PC-9 (cell line): ENCODE measurements at regions of chr3 and their contacts with region 1.

Region 1: DNA sequence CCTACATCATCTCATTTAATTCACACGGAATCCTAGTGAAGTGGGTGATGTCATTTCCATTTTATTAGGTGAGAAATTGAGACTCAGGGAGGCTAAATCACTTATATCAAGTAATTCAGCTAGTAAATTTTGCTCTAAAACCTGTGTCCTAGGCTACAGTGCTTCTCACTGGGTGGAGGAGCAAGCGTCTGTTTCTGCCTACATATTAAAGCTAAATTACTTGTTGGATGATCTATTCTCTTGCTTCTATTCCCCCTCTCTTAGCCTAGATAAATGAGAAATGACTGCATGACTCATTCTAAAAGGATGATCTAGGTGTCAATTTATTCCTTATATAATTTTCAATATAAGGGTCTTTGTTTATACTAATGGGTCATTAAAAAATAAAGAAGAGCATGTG is 37.8 kb upstream of the RBP1 start:
- DNase-seq: no peak
- H3K4me3 ChIP-seq: no peak overlapping the region
- H3K27ac ChIP-seq: no peak overlapping the region
- H3K4me1 ChIP-seq: no peaks in the 10 kb centered on the region
- H3K27me3 ChIP-seq: no peaks in the 10 kb centered on the region
- CTCF ChIP-seq: no peak

Region 2: GRCh38 chr3:139414608-139415224 is 162.6 kb before region 1 on chr3:
- CTCF ChIA-PET with region 1: no interaction called
- POLR2A ChIA-PET with region 1: interaction called, 11 read pairs
- intact Hi-C with region 1: no loop called
- DNase-seq: no peak
- H3K4me3 ChIP-seq: no peak overlapping the region
- H3K27ac ChIP-seq: no peak overlapping the region
- H3K4me1 ChIP-seq: no peaks in the 10 kb centered on the region
- H3K27me3 ChIP-seq: no peaks in the 10 kb centered on the region
- CTCF ChIP-seq: no peak

Region 3: GRCh38 chr3:139559541-139559940 is 17.8 kb before region 1 on chr3:
- CTCF ChIA-PET with region 1: no interaction called
- POLR2A ChIA-PET with region 1: no interaction called
- intact Hi-C with region 1: no loop called
- DNase-seq: peak; percentile 50 to 86
- H3K4me3 ChIP-seq: no peak overlapping the region
- H3K27ac ChIP-seq: 0 out of 2 replicates have a peak overlapping the region, but pooled peaks have one; percentile 39
- H3K4me1 ChIP-seq: peaks cover 47% of the 10 kb centered on the region
- H3K27me3 ChIP-seq: no peaks in the 10 kb centered on the region
- CTCF ChIP-seq: no peak

Region 4: GRCh38 chr3:139894643-139894989 is 317.3 kb after region 1 on chr3:
- CTCF ChIA-PET with region 1: no interaction called
- POLR2A ChIA-PET with region 1: no interaction called
- intact Hi-C with region 1: no loop called
- DNase-seq: no peak
- H3K4me3 ChIP-seq: no peak overlapping the region
- H3K27ac ChIP-seq: no peak overlapping the region
- H3K4me1 ChIP-seq: no peaks in the 10 kb centered on the region
- H3K27me3 ChIP-seq: no peaks in the 10 kb centered on the region
- CTCF ChIP-seq: no peak

Region 5: GRCh38 chr3:140455521-140456214 is 878.3 kb after region 1 on chr3:
- CTCF ChIA-PET with region 1: no interaction called
- POLR2A ChIA-PET with region 1: no interaction called
- intact Hi-C with region 1: no loop called
- DNase-seq: no peak
- H3K4me3 ChIP-seq: no peak overlapping the region
- H3K27ac ChIP-seq: no peak overlapping the region
- H3K4me1 ChIP-seq: no peaks in the 10 kb centered on the region
- H3K27me3 ChIP-seq: no peaks in the 10 kb centered on the region
- CTCF ChIP-seq: no peak